CD4-positive, alpha-beta T cell (primary cell): ENCODE measurements at regions of chr1 and their contacts with region 1.

Region 1: GRCh38 chr1:16440470-16441281 is at the start of gene NECAP2:
- DNase-seq: peak; percentile 86 to 96 (median 93)
- ATAC-seq: peak; percentile 80
- H3K4me3 ChIP-seq: peak within 1 kb of the TSS; percentile 82
- H3K4me3 Mint-ChIP-seq: peak within 1 kb of the TSS; percentile 99
- H3K27ac ChIP-seq: peak within 1 kb of the TSS; percentile 98 to 100
- H3K27ac Mint-ChIP-seq: peak within 1 kb of the TSS; percentile 97
- H3K4me1 ChIP-seq: peaks cover 45% of the 10 kb centered on the region
- H3K4me1 Mint-ChIP-seq: peaks cover 33% of the 10 kb centered on the region
- H3K27me3 ChIP-seq: no peaks in the 10 kb centered on the region
- H3K27me3 Mint-ChIP-seq: no peaks in the 10 kb centered on the region
- CTCF ChIP-seq: peak; percentile 84
- total RNA-seq, gene NECAP2: 65.8 to 66.0 TPM

Region 2: DNA sequence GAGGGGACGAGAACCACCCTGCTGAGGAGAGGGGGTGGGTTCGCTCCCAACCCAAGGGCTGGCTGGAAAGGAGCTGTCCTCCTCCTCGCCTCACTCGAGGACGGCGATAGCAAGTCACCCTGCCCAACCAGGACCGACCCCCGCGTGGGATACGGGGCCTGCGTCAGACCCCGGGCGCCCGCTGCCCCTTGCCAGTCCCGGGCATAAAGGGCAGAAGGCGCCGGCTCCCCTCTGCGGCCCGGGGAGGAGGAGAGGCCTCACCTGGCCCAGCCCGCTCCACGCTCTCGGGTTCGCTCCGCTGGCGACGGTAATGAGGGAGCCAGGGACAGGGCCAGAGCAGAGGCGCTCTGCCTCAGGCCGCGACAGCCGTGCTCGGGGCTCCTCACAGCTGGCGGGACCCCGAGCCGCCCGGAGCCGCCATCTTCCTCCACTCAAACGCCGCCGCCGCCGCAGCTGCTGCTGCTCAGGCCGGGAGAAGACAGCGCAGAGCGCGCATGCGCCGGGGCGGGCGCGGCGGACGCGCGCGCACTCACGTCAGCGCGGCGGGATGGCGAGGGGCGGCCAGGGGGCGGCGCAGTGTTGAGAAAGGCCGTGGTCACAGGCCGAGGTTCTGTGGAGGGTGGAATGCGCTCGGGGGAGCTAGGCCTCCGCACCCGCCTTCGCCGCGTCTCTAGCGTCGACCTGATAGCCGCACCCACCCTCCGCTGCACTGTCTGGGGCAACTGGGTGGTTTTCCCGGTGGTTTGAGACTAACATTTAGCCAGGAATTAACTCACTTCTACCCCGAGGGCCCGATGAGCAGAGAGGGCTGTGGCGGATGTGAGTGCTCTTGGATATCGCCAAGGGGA is 88.5 kb before region 1 on chr1 and contains the start of gene FBXO42:
- CTCF ChIA-PET with region 1: interaction called, 13 read pairs
- POLR2A ChIA-PET with region 1: interaction called, 8 read pairs
- intact Hi-C with region 1: loop called in 1 of 2 experiments (anchors 5 kb)
- DNase-seq: peak; percentile 82 to 98 (median 91)
- ATAC-seq: peak; percentile 90
- H3K4me3 ChIP-seq: peak within 1 kb of the TSS; percentile 97
- H3K4me3 Mint-ChIP-seq: peak within 1 kb of the TSS; percentile 97
- H3K27ac ChIP-seq: peak within 1 kb of the TSS; percentile 83 to 89
- H3K27ac Mint-ChIP-seq: peak within 1 kb of the TSS; percentile 93
- H3K4me1 ChIP-seq: peaks cover 30% of the 10 kb centered on the region
- H3K4me1 Mint-ChIP-seq: peaks cover 34% of the 10 kb centered on the region
- H3K27me3 ChIP-seq: no peaks in the 10 kb centered on the region
- H3K27me3 Mint-ChIP-seq: no peaks in the 10 kb centered on the region
- CTCF ChIP-seq: peak; percentile 52
- total RNA-seq, gene FBXO42: 14.3 to 14.9 TPM

Region 3: DNA sequence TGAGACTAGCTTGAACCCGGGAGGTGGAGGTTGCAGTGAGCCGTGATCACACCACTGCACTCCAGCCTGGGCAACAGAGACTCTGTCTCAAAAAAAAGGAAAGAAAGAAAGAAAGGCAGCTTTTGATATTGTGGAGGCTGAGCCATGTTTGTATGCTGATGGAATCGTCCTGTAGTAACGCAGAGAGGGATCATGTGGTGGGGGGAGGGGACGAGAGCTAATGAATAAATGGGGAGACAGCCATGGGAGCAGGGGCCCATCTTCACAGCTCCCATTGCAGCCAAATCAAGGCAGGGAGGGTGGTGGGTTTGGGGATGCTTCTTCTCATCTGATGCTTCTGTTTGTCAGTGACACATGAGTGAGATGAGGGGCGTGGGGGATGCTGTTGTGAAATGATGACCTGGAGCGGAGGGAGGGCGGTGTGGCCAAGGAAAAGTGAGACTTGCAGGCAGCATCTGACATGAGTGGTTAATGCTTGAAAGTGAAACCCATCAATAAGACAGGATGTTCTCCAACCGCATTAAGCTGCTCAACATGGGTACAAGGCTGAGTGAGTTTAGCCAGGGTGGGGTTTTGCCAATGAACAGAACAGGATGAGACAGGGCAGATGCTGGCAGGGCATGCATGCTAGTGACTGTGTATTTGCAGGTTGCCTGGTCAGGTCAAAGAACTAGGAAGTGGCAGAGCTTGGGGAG is 20.1 kb before region 1 on chr1:
- CTCF ChIA-PET with region 1: interaction called, 7 read pairs
- POLR2A ChIA-PET with region 1: interaction called, 39 read pairs
- intact Hi-C with region 1: no loop called
- DNase-seq: peak; percentile 19 to 91 (median 45)
- ATAC-seq: peak; percentile 95
- H3K4me3 ChIP-seq: peak overlapping the region; percentile 7
- H3K4me3 Mint-ChIP-seq: peak overlapping the region; percentile 36
- H3K27ac ChIP-seq: peak overlapping the region; percentile 30 to 65
- H3K27ac Mint-ChIP-seq: peak overlapping the region; percentile 74
- H3K4me1 ChIP-seq: peaks cover 32% of the 10 kb centered on the region
- H3K4me1 Mint-ChIP-seq: peaks cover 29% of the 10 kb centered on the region
- H3K27me3 ChIP-seq: no peaks in the 10 kb centered on the region
- H3K27me3 Mint-ChIP-seq: no peaks in the 10 kb centered on the region
- CTCF ChIP-seq: no peak

Region 4: GRCh38 chr1:16498573-16499413 is 58.1 kb after region 1 on chr1:
- CTCF ChIA-PET with region 1: interaction called, 5 read pairs
- POLR2A ChIA-PET with region 1: interaction called, 4 read pairs
- intact Hi-C with region 1: loop called (anchors 2 to 10 kb)
- DNase-seq: peak; percentile 70 to 93 (median 82)
- ATAC-seq: peak; percentile 90
- H3K4me3 ChIP-seq: peak overlapping the region; percentile 92
- H3K4me3 Mint-ChIP-seq: peak overlapping the region; percentile 80
- H3K27ac ChIP-seq: peak overlapping the region in 1 of 2 donors; percentile 21
- H3K27ac Mint-ChIP-seq: peak overlapping the region; percentile 75
- H3K4me1 ChIP-seq: peaks cover 20% of the 10 kb centered on the region
- H3K4me1 Mint-ChIP-seq: peaks cover 25% of the 10 kb centered on the region
- H3K27me3 ChIP-seq: no peaks in the 10 kb centered on the region
- H3K27me3 Mint-ChIP-seq: no peaks in the 10 kb centered on the region
- CTCF ChIP-seq: no peak